CD4-positive, alpha-beta T cell (primary cell): ENCODE measurements at regions of chr20 and their contacts with region 1.

Region 1: GRCh38 chr20:37095599-37096414 is at the start of gene RBL1:
- DNase-seq: peak; percentile 73 to 93 (median 80)
- ATAC-seq: peak; percentile 79
- H3K4me3 ChIP-seq: peak within 1 kb of the TSS; percentile 89
- H3K4me3 Mint-ChIP-seq: peak within 1 kb of the TSS; percentile 96
- H3K27ac ChIP-seq: peak within 1 kb of the TSS; percentile 69 to 92
- H3K27ac Mint-ChIP-seq: peak within 1 kb of the TSS; percentile 99
- H3K4me1 ChIP-seq: peaks cover 37% of the 10 kb centered on the region
- H3K4me1 Mint-ChIP-seq: peaks cover 34% of the 10 kb centered on the region
- H3K27me3 ChIP-seq: no peaks in the 10 kb centered on the region
- H3K27me3 Mint-ChIP-seq: no peaks in the 10 kb centered on the region
- CTCF ChIP-seq: peak; percentile 16
- total RNA-seq, gene RBL1: 37.4 to 39.1 TPM

Region 2: DNA sequence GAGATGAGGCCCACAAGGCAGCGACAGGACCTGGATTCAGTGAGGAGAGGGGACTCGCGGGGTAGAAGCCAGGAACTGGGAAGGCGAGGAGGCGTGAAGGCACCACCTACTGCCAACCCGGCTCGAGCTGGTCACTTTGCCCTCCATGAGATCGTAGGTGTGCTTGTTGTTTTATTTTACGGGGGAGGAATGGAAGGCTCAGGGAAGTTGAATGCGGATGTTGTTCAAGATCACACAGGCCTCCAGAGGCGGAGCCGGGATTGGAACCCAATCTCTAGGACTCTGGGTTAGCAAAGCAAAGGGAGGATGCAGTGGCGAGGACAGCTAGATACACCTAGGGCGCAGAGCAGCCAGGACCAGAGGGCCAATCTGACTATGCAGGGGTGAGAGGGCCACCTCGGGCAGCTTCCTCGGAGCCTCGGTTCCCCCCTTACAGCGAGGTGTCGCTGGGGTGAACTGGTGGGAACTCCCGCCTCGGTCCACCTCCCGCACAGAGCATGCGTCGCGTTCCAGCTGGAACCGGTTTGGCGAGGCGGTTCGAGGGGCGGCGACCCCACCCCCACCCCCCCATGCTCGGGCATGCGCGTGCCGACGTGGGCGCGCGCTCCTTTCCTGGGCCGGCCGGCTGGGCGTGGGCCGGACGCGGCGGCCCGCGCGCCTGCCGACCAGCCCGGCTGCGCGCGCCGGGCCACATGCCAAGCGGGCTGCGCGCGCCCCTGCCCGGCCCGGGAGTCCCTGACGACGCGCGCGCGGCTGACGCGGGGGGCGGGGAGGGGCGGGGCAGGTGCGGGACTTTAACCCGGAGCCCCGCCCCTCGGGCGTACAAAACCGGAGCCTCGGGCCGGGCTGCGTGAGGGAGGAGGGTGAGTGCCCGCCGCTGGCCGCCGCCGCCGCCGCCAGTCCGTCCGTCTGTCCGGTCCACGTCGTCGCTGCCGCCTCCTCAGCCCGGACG is 634.9 kb before region 1 on chr20:
- CTCF ChIA-PET with region 1: no interaction called
- POLR2A ChIA-PET with region 1: no interaction called
- intact Hi-C with region 1: loop called in 1 of 2 experiments (anchors 10 kb)
- DNase-seq: peak; percentile 79 to 98 (median 90)
- ATAC-seq: peak; percentile 75
- H3K4me3 ChIP-seq: peak overlapping the region; percentile 82
- H3K4me3 Mint-ChIP-seq: peak overlapping the region; percentile 89
- H3K27ac ChIP-seq: peak overlapping the region; percentile 76 to 93
- H3K27ac Mint-ChIP-seq: peak overlapping the region; percentile 84
- H3K4me1 ChIP-seq: peaks cover 50% of the 10 kb centered on the region
- H3K4me1 Mint-ChIP-seq: peaks cover 50% of the 10 kb centered on the region
- H3K27me3 ChIP-seq: no peaks in the 10 kb centered on the region
- H3K27me3 Mint-ChIP-seq: no peaks in the 10 kb centered on the region
- CTCF ChIP-seq: no peak

Region 3: GRCh38 chr20:37007898-37008649 is 87.7 kb before region 1 on chr20:
- CTCF ChIA-PET with region 1: interaction called, 8 read pairs
- POLR2A ChIA-PET with region 1: interaction called, 9 read pairs
- intact Hi-C with region 1: loop called in 1 of 2 experiments (anchors 5 kb)
- DNase-seq: peak in 11 of 14 experiments; percentile 11 to 79 (median 32)
- ATAC-seq: peak; percentile 100
- H3K4me3 ChIP-seq: no peak overlapping the region
- H3K4me3 Mint-ChIP-seq: peak overlapping the region; percentile 47
- H3K27ac ChIP-seq: peak overlapping the region in 1 of 2 donors; percentile 14
- H3K27ac Mint-ChIP-seq: peak overlapping the region; percentile 84
- H3K4me1 ChIP-seq: peaks cover 13% of the 10 kb centered on the region
- H3K4me1 Mint-ChIP-seq: peaks cover 26% of the 10 kb centered on the region
- H3K27me3 ChIP-seq: no peaks in the 10 kb centered on the region
- H3K27me3 Mint-ChIP-seq: no peaks in the 10 kb centered on the region
- CTCF ChIP-seq: peak; percentile 83

Region 4: DNA sequence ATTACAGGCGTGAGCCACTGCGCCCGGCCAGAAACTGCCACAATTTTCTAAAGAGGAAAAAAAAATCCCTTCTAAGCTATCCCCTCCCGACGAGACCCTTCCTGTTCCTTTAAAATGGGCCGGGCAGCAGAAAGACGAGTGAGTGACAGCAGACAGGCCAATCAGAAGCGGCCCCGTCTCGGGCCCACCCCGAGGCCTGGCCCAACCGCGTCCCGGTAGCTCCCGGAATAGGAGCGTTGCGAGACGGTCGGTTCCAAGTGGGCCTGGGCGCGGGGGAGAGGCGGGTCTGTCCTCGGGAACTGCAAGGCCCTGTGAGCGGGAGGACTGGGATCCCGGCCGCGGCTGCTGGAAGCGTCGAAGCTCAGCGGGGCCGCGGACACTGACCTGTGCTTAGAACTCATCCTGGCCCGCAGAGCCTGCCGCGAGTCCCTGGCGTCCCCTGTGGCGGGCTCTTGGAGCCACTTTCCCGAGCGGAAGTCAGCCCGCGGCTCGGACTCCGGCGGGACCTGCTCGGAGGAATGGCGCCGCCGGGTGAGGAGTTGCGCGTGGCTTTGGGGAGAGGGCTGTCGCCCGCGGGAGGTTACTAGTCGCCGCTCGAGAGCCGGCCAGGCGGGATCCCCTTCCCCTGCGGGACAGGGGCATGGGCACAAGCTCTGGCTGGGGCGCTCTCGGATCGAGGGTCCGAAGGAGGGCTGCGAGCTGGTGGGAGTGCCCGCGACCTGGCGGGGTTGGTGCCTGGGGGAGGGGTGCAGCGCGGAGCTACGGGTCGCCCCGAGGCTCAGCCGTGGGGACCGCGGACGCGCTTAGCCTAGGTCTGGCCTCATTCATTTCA is 83.2 kb after region 1 on chr20 and contains the starts of genes MROH8 and RPN2:
- CTCF ChIA-PET with region 1: interaction called, 4 read pairs
- POLR2A ChIA-PET with region 1: interaction called, 33 read pairs
- intact Hi-C with region 1: loop called (anchors 2 to 5 kb)
- DNase-seq: peak; percentile 87 to 96 (median 93)
- ATAC-seq: peak; percentile 92
- H3K4me3 ChIP-seq: peak within 1 kb of the TSS; percentile 80
- H3K4me3 Mint-ChIP-seq: peak within 1 kb of the TSS; percentile 99
- H3K27ac ChIP-seq: peak within 1 kb of the TSS; percentile 84 to 90
- H3K27ac Mint-ChIP-seq: peak within 1 kb of the TSS; percentile 88
- H3K4me1 ChIP-seq: peaks cover 40% of the 10 kb centered on the region
- H3K4me1 Mint-ChIP-seq: peaks cover 46% of the 10 kb centered on the region
- H3K27me3 ChIP-seq: no peaks in the 10 kb centered on the region
- H3K27me3 Mint-ChIP-seq: no peaks in the 10 kb centered on the region
- CTCF ChIP-seq: no peak
- total RNA-seq, gene MROH8: 1.1 to 1.2 TPM
- total RNA-seq, gene RPN2: 62.8 to 65.8 TPM

Region 5: GRCh38 chr20:38033310-38034107 is 937.7 kb after region 1 on chr20 and contains the starts of genes RPRD1B and TTI1:
- CTCF ChIA-PET with region 1: no interaction called
- POLR2A ChIA-PET with region 1: no interaction called
- intact Hi-C with region 1: loop called in 1 of 2 experiments (anchors 5 kb)
- DNase-seq: peak; percentile 74 to 94 (median 84)
- ATAC-seq: peak; percentile 84
- H3K4me3 ChIP-seq: peak within 1 kb of the TSS; percentile 79
- H3K4me3 Mint-ChIP-seq: peak within 1 kb of the TSS; percentile 99
- H3K27ac ChIP-seq: peak within 1 kb of the TSS; percentile 92 to 98
- H3K27ac Mint-ChIP-seq: peak within 1 kb of the TSS; percentile 100
- H3K4me1 ChIP-seq: peaks cover 38% of the 10 kb centered on the region
- H3K4me1 Mint-ChIP-seq: peaks cover 85% of the 10 kb centered on the region
- H3K27me3 ChIP-seq: no peaks in the 10 kb centered on the region
- H3K27me3 Mint-ChIP-seq: no peaks in the 10 kb centered on the region
- CTCF ChIP-seq: no peak
- total RNA-seq, gene RPRD1B: 54.8 to 55.7 TPM
- total RNA-seq, gene TTI1: 10.6 to 11.4 TPM